ENCODE measurements at regions of chr1 and their contacts with region 1.

Region 1: GRCh38 chr1:983799-984473 is 2.0 kb upstream of the PERM1 start:
- DNase-seq: peak; percentile 52
- H3K4me3 ChIP-seq: no peak overlapping the region
- H3K27ac ChIP-seq: no peak overlapping the region
- H3K4me1 ChIP-seq: no peaks in the 10 kb centered on the region
- H3K27me3 ChIP-seq: peaks cover 7% of the 10 kb centered on the region
- CTCF ChIP-seq: peak; percentile 91

Region 2: DNA sequence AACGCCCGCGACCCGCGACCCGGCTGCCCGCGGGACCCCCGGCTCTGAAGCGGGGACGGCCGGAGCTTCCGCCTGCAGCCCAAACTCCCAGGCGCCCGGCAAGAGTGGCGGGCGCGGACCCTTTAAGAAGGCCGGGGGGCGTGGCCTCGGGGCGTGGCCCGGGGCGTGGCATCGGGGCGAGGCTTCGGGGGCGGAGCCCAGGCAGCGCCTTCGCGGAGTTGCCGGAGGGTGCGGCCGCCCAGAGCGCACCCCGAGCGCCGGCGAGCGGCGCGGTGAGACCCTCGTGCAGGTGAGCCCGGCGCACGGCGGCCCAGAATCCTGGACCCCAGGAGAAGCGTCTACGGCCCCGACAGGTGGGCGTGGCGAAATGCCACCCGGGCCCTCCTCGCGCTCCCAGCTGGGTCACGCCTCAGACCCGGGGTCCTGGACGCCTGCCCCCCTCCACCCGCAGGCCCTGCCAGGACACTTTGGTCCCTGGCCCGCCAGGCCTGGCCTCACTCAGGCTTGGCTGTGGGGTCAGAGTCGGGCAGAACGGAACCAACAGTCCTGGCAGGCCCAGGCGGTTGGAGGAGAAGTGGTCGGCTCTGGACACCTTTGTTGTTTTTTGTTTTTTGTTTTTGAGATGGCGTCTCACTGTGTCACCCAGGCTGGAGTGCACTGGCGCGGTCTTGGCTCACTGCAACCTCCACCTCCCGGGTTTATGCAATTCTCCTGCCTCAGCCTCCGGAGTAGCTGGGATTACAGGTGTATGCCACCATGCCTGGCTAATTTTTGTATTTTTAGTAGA is 75.8 kb after region 1 on chr1:
- intact Hi-C with region 1: loop called (anchors 5 kb)
- DNase-seq: peak; percentile 94
- H3K4me3 ChIP-seq: peak overlapping the region; percentile 40
- H3K27ac ChIP-seq: no peak overlapping the region
- H3K4me1 ChIP-seq: peaks cover 20% of the 10 kb centered on the region
- H3K27me3 ChIP-seq: peaks cover 57% of the 10 kb centered on the region
- CTCF ChIP-seq: no peak

Region 3: GRCh38 chr1:1291548-1292441 is 307.9 kb after region 1 on chr1:
- intact Hi-C with region 1: loop called (anchors 10 kb)
- DNase-seq: peak; percentile 83
- H3K4me3 ChIP-seq: no peak overlapping the region
- H3K27ac ChIP-seq: no peak overlapping the region
- H3K4me1 ChIP-seq: peaks cover 6% of the 10 kb centered on the region
- H3K27me3 ChIP-seq: peaks cover 8% of the 10 kb centered on the region
- CTCF ChIP-seq: peak; percentile 66

Measured in colonic mucosa (tissue), 4 donors.